Right cardiac atrium (tissue), 5 donors: ENCODE measurements at regions of chr4 and their contacts with region 1.

Region 1: DNA sequence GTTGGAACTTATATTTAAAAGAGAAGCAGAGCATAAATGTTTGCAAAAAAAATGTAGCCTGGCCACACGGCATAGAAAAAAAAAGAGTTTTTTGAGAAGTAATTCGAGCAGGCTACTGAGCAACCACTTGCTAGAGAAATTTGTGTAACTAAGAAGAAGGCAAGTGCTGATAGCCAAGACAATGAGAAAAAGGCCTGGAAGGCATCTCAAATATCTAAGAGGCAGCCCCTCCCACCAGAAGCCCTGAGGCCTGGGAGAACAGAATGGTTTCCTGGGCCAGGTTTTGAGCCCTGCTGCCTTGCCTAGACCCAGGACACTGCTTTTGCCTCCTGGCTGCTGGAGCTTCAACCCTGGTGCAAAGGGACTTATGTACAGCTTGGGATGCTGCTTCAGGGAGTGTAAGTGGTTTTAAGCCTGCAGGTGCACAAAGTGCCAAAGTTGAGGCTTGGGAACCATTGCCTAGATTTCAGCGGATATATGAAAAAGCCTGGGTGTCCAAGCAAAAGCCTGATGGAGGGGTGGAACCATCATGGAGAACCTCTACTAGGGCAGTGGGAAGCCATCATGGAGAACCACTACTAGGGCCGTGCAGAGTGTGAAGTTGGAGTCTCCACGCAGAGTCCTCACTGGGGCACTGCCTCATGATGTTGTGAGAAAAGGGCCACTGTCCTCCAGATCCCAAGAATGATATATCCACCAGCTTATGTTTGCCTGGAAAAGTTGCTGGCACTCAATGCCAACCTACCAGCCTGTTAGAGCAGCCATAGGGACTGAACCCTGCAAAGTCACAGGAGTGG is 9.7 kb downstream of the TECRL start:
- DNase-seq: no peak
- ATAC-seq: peak; percentile 24 to 34
- H3K4me3 ChIP-seq: no peak overlapping the region
- H3K27ac ChIP-seq: peak overlapping the region; percentile 68
- H3K4me1 ChIP-seq: peaks cover 2% of the 10 kb centered on the region
- H3K27me3 ChIP-seq: no peaks in the 10 kb centered on the region

Region 2: GRCh38 chr4:64271601-64272081 is 127.9 kb before region 1 on chr4:
- intact Hi-C with region 1: loop called in 1 of 4 experiments (anchors 10 kb)
- DNase-seq: peak; percentile 31 to 81 (median 70)
- ATAC-seq: peak; percentile 89 to 90
- H3K4me3 ChIP-seq: no peak overlapping the region
- H3K27ac ChIP-seq: peak overlapping the region; percentile 85
- H3K4me1 ChIP-seq: no peaks in the 10 kb centered on the region
- H3K27me3 ChIP-seq: no peaks in the 10 kb centered on the region